Activated CD4-positive, alpha-beta memory T cell treated with anti-CD3 and anti-CD28 coated beads for 36 hours (primary cell): ENCODE measurements at regions of chr14 and their contacts with region 1.

Region 1: GRCh38 chr14:63282997-63283883 is 35.5 kb downstream of the GPHB5 start:
- DNase-seq: peak; percentile 46
- H3K4me3 Mint-ChIP-seq: no peak overlapping the region
- H3K27ac Mint-ChIP-seq: no peak overlapping the region
- H3K4me1 Mint-ChIP-seq: no peaks in the 10 kb centered on the region
- H3K27me3 Mint-ChIP-seq: peaks cover 5% of the 10 kb centered on the region

Region 2: DNA sequence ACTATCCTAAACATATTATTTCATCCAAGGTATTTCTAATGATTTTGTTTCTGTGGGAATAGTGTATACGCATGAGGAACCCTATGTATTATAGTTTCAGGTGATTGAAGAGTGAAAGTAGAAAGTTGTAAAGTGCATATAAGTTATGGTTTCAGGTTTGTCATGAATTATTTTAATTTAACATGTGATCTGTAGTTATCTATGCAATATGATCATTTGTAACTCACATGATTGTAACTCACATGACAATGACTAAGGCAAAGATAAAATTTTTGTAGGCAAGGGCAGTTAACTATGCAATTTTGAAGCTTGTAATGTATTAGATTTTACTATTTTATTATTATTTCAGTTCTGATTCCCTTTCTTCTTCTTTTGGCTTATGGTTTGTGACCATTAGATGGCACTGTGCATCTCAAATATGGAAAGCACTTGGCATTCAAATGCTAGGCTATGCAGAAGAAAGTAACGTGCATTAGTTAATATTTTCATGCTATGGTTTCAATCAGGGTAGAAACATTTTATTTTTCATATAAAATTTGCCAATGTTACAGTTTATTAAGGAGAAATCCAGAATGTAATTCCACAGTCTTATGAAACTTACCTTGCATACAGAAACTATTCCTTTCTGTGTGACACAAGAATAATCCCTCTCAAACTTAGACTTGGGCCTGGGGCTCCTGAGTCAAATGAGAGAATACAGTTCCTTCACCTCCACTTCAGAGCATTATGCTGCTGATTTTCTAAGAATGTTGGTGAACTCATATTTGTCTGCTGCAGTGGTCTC is 1986.3 kb before region 1 on chr14:
- CTCF ChIA-PET with region 1: no interaction called
- POLR2A ChIA-PET with region 1: no interaction called
- intact Hi-C with region 1: loop called (anchors 10 kb)
- DNase-seq: no peak
- H3K4me3 Mint-ChIP-seq: no peak overlapping the region
- H3K27ac Mint-ChIP-seq: no peak overlapping the region
- H3K4me1 Mint-ChIP-seq: peaks cover 44% of the 10 kb centered on the region
- H3K27me3 Mint-ChIP-seq: no peaks in the 10 kb centered on the region

Region 3: GRCh38 chr14:61934385-61934784 is 1348.9 kb before region 1 on chr14:
- CTCF ChIA-PET with region 1: no interaction called
- POLR2A ChIA-PET with region 1: no interaction called
- intact Hi-C with region 1: loop called (anchors 10 kb)
- DNase-seq: peak; percentile 41
- H3K4me3 Mint-ChIP-seq: no peak overlapping the region
- H3K27ac Mint-ChIP-seq: no peak overlapping the region
- H3K4me1 Mint-ChIP-seq: peaks cover 7% of the 10 kb centered on the region
- H3K27me3 Mint-ChIP-seq: peaks cover 48% of the 10 kb centered on the region

Region 4: GRCh38 chr14:63296060-63296563 is 12.9 kb after region 1 on chr14:
- CTCF ChIA-PET with region 1: interaction called, 5 read pairs
- POLR2A ChIA-PET with region 1: no interaction called
- intact Hi-C with region 1: loop called (anchors 1 kb)
- DNase-seq: peak; percentile 48
- H3K4me3 Mint-ChIP-seq: no peak overlapping the region
- H3K27ac Mint-ChIP-seq: no peak overlapping the region
- H3K4me1 Mint-ChIP-seq: peaks cover 13% of the 10 kb centered on the region
- H3K27me3 Mint-ChIP-seq: peaks cover 16% of the 10 kb centered on the region

Region 5: DNA sequence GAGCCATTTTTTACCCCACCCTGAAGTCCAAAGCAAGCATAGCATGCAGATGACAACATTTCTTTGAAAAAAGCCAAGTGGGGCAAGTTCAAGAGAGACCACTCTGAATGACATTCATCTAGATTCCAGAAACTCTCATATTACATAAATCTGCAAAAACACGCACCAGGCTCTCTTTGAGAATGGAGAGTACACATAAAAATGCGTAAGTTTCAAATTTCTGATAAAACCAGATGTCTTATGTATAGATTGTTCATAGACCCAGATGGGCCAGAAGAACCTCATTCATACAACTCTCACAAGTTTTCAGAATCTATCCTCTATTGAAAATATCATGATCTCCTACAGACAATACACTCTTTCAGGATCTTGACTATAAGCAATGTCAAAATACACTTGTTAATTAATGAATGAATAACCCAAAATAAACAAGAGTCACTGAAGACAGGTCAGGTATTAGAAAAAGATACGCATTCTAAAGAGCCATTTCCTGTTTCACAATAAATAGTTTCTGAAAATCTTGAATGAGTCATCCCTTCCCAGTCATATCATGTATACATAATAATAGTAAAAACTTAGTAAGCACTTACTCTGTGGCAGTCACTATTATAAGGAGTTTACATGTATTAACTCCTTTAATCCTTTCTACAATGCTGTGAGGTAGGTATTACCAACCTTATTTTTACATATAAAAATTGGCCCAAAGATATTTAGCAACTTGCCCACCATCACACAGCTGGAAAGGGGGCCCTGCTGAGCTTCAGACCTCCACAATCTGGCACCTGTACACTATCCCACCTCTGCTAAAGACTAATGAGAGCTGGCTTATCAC is 187.9 kb after region 1 on chr14:
- CTCF ChIA-PET with region 1: no interaction called
- POLR2A ChIA-PET with region 1: no interaction called
- intact Hi-C with region 1: loop called (anchors 5 kb)
- DNase-seq: no peak
- H3K4me3 Mint-ChIP-seq: no peak overlapping the region
- H3K27ac Mint-ChIP-seq: no peak overlapping the region
- H3K4me1 Mint-ChIP-seq: peaks cover 49% of the 10 kb centered on the region
- H3K27me3 Mint-ChIP-seq: no peaks in the 10 kb centered on the region